BJ (cell line): ENCODE measurements at regions of chr10 and their contacts with region 1.

Region 1: DNA sequence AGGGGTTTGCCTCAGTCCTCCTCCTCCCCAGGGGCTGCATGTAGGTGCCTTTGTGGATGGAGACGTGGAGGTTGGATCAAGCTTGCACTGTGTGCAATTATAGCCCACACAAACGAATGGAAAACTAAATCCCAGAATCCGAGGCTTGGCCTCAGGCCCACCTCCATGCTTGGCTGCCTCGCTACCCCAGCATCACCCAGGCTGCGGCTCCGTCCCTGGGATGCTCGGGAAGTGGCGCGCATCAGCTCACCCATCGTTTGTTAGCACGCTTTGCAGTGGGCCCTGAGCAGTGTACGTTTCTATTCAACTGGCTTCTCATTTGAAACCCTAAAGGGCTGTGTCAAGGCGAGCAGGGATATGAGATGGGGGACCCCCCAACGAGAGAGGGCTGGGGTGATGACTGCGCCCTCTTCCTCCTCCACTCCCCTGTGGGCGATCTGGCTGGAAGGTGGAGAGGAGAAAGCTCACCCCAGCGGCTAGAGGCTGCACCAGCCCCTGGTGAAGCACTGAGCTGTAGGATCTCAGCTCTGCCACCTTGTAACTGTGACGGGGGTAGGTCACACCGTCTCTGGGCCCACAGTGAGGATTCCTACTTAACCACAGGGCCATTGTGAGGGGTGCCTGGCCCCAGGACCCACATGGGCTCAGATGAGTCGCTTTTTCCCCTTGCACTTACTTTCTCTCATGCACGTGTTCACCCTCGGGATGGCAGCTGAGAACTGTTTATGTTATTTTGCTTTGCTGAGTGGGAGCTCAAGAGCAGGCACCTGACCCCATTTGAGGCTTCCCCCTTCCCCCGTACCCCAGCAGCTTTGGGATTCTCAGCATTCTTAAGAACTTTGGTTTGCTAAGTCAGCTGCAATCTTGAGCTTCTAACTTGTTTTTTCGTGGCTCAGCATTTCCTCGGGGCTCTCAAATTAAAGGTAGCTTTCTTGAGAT is 12.7 kb upstream of the BTBD16 start:
- DNase-seq: no peak
- H3K4me3 ChIP-seq: no peak overlapping the region
- H3K27me3 ChIP-seq: no peaks in the 10 kb centered on the region
- CTCF ChIP-seq: no peak

Region 2: DNA sequence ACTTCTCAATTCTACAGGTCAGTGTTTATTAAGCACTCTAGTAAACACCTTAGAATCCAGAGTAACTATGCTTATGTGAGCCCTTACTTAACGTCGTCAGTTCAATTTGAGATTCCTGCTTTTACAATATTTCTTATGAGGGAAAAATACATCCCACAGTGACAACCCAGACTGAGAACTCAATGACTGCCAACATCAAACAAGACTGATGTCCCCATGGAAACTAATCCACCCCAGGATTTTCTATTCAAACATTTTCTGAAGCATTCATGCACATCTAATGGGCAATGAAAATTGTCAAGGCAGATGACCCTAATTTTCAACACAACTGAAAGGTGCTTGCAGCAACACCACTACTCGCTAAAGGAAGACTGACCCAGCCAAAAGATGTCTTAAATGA is 397.6 kb before region 1 on chr10:
- CTCF ChIA-PET with region 1: no interaction called
- POLR2A ChIA-PET with region 1: no interaction called
- DNase-seq: no peak
- H3K4me3 ChIP-seq: no peak overlapping the region
- H3K27me3 ChIP-seq: no peaks in the 10 kb centered on the region
- CTCF ChIP-seq: no peak

Region 3: DNA sequence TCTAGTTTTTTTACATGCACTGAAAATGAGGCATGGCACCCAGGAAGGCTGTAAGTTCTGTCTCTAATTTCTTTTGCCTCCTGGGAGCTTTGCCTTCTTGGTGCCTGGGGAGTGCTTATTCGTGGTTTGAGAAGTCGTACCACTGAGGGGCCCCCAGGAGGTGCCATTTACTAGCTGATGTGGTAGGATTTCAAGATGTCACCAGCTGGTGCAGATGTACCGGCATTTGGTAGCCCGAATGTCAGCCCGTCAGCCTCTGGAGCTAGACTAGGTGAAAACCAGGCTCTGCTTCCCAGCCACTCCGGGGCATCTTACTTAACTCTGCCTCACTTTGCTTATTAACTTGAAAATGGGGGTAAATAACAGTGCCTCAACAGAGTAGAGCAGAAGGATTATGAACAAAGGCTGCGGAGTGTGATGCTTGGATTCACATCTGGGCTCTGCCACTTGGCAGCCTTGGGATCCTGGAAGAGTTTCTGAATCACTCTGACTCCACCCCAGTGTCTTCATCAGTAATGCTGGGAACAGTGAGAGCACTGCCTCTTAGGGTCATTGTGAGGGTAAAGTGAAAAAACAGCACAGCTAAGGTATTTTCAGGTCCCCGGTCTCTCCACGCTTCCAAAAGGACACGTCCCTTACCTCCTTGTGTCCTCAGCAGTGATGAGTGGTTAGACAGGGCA is 18.7 kb before region 1 on chr10:
- CTCF ChIA-PET with region 1: interaction called, 10 read pairs
- POLR2A ChIA-PET with region 1: no interaction called
- DNase-seq: peak; percentile 26
- H3K4me3 ChIP-seq: no peak overlapping the region
- H3K27me3 ChIP-seq: no peaks in the 10 kb centered on the region
- CTCF ChIP-seq: no peak